B cell (primary cell): ENCODE measurements at regions of chr9 and their contacts with region 1.

Region 1: DNA sequence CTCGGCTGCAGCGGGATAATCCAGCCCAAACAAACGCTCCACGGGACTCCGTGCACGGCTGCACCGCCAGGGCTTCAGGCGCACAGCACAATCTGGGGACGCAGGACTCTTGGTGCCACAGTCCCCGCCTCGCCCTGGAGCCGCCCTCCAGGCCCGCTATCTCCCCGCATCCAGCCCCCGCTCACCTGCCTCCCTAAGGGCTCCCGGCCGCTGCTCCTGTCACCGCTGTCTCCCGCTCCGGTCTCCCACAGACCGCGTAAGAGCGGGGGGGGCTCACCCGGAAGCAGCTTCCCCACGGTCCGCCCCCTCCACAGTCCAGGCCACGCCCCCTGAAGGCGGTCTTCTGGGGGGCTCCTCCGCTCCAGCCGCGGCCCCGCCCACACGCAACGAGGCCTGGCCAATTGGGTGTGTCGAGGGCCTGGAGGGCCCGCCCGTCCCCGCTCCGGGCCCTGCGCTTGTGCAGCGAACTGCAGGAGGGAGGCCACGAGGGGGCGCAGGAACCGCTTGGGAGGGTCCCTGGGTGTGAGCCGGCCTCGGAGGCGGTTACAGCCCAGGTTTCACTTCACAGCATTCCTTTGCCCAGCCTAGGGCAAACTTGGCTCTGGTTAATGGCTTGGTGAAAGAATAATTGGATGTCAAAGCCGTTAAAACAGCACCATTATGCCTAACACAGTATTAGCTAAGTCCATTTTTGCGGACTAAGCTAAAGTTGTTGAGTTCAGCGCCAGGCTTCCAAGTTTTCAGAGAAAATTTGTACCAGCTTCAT is at the start of gene ALAD:
- DNase-seq: peak; percentile 99
- ATAC-seq: peak; percentile 99
- H3K4me3 ChIP-seq: peak within 1 kb of the TSS; percentile 60 to 98 (median 82)
- H3K4me3 Mint-ChIP-seq: peak within 1 kb of the TSS; percentile 98
- H3K27ac ChIP-seq: peak within 1 kb of the TSS; percentile 18 to 73
- H3K27ac Mint-ChIP-seq: peak within 1 kb of the TSS; percentile 93
- H3K4me1 ChIP-seq: peaks cover 10 to 18% of the 10 kb centered on the region in 2 donors
- H3K4me1 Mint-ChIP-seq: peaks cover 28% of the 10 kb centered on the region
- H3K27me3 ChIP-seq: no peaks in the 10 kb centered on the region
- H3K27me3 Mint-ChIP-seq: no peaks in the 10 kb centered on the region
- CTCF ChIP-seq: peak; percentile 93
- total RNA-seq, gene ALAD: 39.8 and 40.1 TPM in 2 replicates

Region 2: GRCh38 chr9:111631071-111631971 is 1769.9 kb before region 1 on chr9 and contains the start of gene DNAJC25:
- CTCF ChIA-PET with region 1: no interaction called
- POLR2A ChIA-PET with region 1: no interaction called
- intact Hi-C with region 1: loop called (anchors 10 kb)
- DNase-seq: peak; percentile 98
- ATAC-seq: peak; percentile 87
- H3K4me3 ChIP-seq: peak within 1 kb of the TSS; percentile 65 to 92 (median 85)
- H3K4me3 Mint-ChIP-seq: peak within 1 kb of the TSS; percentile 98
- H3K27ac ChIP-seq: peak within 1 kb of the TSS; percentile 64 to 84
- H3K27ac Mint-ChIP-seq: peak within 1 kb of the TSS; percentile 93
- H3K4me1 ChIP-seq: peaks cover 15 to 17% of the 10 kb centered on the region in 2 donors
- H3K4me1 Mint-ChIP-seq: peaks cover 39% of the 10 kb centered on the region
- H3K27me3 ChIP-seq: no peaks in the 10 kb centered on the region
- H3K27me3 Mint-ChIP-seq: no peaks in the 10 kb centered on the region
- CTCF ChIP-seq: no peak
- total RNA-seq, gene DNAJC25: 3.8 and 4.1 TPM in 2 replicates

Region 3: DNA sequence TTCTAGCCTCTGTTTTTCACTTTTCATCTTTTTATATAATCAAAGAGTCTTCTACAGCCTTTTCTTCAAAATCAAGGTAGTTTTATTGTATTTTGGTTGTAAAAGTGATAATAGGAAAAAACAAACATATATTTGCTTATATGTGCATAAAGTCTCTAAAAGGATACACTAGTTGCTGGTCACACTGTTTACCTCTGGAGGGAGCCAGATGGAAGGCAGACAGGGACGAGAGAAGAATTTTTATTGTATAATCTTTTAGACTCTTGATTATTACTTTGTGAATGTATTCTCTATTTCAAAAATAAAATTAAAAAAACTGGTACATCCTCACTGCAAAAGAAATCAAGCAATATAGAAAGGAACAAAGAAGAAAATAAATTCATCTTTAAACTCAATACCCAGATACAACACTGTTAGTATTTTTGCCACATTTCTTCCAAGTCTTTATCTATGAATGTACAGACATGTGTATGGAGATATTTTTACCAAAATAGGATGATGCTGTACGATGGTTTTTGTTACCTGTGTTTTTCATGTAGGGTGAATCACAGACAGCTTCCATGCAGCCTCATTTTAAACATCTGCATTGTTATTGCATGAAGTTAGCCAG is 91.9 kb before region 1 on chr9:
- CTCF ChIA-PET with region 1: interaction called, 34 read pairs
- POLR2A ChIA-PET with region 1: no interaction called
- intact Hi-C with region 1: no loop called
- DNase-seq: peak; percentile 39
- ATAC-seq: no peak
- H3K4me3 ChIP-seq: no peak overlapping the region
- H3K4me3 Mint-ChIP-seq: no peak overlapping the region
- H3K27ac ChIP-seq: no peak overlapping the region
- H3K27ac Mint-ChIP-seq: no peak overlapping the region
- H3K4me1 ChIP-seq: no peaks in the 10 kb centered on the region
- H3K4me1 Mint-ChIP-seq: no peaks in the 10 kb centered on the region
- H3K27me3 ChIP-seq: no peaks in the 10 kb centered on the region
- H3K27me3 Mint-ChIP-seq: peaks cover 4% of the 10 kb centered on the region
- CTCF ChIP-seq: peak; percentile 67

Region 4: GRCh38 chr9:113376634-113377567 is 24.3 kb before region 1 on chr9 and contains the start of gene HDHD3:
- CTCF ChIA-PET with region 1: interaction called, 6 read pairs
- POLR2A ChIA-PET with region 1: interaction called, 3 read pairs
- intact Hi-C with region 1: loop called (anchors 1 kb)
- DNase-seq: peak; percentile 89
- ATAC-seq: peak; percentile 92
- H3K4me3 ChIP-seq: peak within 1 kb of the TSS; percentile 51 to 98 (median 87)
- H3K4me3 Mint-ChIP-seq: peak within 1 kb of the TSS; percentile 96
- H3K27ac ChIP-seq: peak within 1 kb of the TSS; percentile 56 to 78
- H3K27ac Mint-ChIP-seq: peak within 1 kb of the TSS; percentile 87
- H3K4me1 ChIP-seq: peaks cover 7 to 21% of the 10 kb centered on the region in 2 donors
- H3K4me1 Mint-ChIP-seq: peaks cover 24% of the 10 kb centered on the region
- H3K27me3 ChIP-seq: no peaks in the 10 kb centered on the region
- H3K27me3 Mint-ChIP-seq: no peaks in the 10 kb centered on the region
- CTCF ChIP-seq: no peak
- total RNA-seq, gene HDHD3: 26.2 and 29.6 TPM in 2 replicates

Region 5: GRCh38 chr9:113591001-113591898 is 190.0 kb after region 1 on chr9:
- CTCF ChIA-PET with region 1: interaction called, 17 read pairs
- POLR2A ChIA-PET with region 1: no interaction called
- intact Hi-C with region 1: no loop called
- DNase-seq: peak; percentile 75
- ATAC-seq: peak; percentile 67
- H3K4me3 ChIP-seq: no peak overlapping the region
- H3K4me3 Mint-ChIP-seq: no peak overlapping the region
- H3K27ac ChIP-seq: no peak overlapping the region
- H3K27ac Mint-ChIP-seq: no peak overlapping the region
- H3K4me1 ChIP-seq: peaks cover 12 to 17% of the 10 kb centered on the region in 2 donors
- H3K4me1 Mint-ChIP-seq: peaks cover 16% of the 10 kb centered on the region
- H3K27me3 ChIP-seq: no peaks in the 10 kb centered on the region
- H3K27me3 Mint-ChIP-seq: no peaks in the 10 kb centered on the region
- CTCF ChIP-seq: peak; percentile 85